Head of caudate nucleus (tissue), 42 donors: ENCODE measurements at regions of chr4 and their contacts with region 1.

Region 1: GRCh38 chr4:15649914-15650545 is 5.1 kb downstream of the FBXL5 start:
- DNase-seq: peak in 29 of 42 donors; percentile 11 to 78 (median 45)

Region 2: DNA sequence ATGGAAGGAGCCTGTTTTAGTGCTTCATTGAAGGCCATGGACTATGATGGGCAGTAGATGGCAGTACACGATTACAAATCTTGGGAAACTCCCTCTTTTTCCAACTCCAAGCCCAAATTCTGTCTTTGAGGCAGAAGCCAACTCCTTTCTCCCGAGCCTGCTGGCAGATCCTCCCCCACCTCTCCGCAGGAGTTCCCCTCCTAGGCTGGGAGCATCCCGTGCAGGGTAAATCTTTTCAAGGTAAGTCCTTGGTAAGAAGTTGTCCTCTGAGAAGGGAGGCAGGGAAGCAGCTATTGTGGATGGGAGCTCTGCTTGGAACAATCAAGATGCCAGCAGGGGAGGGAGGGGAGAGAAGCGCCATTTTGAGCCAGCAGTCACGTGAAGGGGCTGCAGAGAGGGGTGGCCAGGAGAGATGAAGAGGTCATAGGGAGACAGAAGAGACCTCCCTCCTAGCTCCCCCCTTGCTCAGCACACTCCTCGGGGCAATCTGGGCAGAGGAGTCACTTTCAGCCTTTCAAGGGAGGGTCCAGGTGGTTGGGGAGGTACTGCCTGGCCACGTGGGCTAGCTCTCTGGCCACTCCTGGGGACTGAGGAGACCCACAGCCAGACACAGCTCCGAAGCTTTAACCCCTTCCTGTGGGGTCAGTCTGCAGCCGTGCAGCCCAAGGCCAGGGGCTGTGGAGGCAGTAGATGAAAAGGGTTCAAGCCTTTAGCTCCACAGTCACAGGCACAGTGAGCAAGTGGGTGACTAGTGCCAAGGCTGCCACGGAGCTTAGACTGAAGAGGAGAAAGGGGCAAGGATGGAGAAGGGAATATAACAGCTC is 170.7 kb before region 1 on chr4:
- intact Hi-C with region 1: loop called (anchors 5 kb)
- DNase-seq: peak; percentile 42 to 89 (median 70)

Region 3: DNA sequence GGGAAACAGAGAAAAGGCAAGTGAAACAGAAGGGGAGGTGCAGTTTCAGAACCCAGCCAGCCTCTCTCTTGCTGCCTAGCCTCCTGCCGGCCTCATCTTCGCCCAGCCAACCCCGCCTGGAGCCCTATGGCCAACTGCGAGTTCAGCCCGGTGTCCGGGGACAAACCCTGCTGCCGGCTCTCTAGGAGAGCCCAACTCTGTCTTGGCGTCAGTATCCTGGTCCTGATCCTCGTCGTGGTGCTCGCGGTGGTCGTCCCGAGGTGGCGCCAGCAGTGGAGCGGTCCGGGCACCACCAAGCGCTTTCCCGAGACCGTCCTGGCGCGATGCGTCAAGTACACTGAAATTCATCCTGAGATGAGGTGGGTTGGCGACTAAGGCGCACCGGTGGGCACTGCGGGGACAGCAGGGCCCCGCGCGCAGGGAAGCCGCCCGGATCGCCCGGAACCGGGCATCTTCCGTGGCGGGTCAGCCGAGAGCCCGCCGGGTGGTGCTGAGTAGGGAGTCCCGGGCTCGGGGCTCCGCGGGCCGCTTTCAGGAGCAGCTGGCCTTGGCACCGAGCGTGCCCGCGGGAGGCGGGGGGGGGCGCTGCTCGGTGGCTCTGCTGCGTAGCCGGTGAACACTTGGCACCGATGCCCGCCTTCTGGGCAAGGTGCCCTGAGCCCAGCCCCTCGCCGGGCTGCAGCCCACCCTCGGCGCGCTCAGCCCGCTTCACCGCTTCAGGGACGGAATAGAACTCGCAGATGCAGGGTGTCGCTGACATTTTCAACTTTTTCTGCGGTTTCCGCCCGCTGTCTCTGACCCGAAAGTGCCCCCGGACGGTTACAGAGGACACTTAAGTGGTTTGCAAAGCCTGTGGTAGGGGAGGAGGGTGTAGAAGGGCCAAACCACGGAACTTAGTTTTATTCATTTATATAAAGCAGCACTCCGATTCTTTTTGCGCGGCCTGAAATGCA is 128.5 kb after region 1 on chr4 and contains the start of gene CD38:
- intact Hi-C with region 1: no loop called
- DNase-seq: peak in 41 of 42 donors; percentile 6 to 82 (median 49)

Region 4: DNA sequence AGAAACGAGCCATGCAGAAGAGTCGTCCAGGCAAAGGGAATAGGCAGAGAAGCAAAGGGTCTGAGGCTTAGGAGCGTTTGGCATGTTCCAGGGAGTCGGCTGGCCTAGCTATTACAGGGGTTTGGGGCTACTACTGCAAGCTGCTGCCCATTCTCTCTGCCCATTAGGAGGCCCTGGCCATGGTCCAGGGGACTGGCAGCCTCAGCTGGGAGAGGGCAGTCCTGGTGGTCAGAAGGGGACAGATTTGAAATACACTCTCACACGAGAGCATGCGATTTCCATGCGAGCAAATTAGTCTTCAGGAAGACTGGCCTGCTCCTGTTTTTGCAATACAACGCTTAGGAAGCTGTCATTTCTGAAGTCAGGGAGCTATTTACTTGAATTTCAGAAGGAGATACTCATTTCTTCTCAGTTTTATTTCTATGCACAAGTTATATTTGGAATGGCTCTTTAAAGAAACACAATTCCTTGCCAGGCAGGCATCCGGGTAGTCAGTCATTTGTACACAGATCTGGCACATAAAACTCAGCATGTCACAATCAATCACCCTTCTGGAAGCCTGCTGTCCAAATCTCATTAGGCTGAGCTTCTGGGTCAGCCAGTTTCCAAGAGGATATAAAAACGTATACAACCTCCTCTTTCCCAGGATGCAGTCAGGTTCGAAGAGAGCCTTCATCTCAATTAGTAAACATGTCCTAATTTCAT is 406.8 kb after region 1 on chr4:
- intact Hi-C with region 1: no loop called
- DNase-seq: peak in 33 of 42 donors; percentile 11 to 66 (median 34)